Activated CD8-positive, alpha-beta T cell treated with anti-CD3 and anti-CD28 coated beads for 36 hours (primary cell): ENCODE measurements at regions of chr7 and their contacts with region 1.

Region 1: DNA sequence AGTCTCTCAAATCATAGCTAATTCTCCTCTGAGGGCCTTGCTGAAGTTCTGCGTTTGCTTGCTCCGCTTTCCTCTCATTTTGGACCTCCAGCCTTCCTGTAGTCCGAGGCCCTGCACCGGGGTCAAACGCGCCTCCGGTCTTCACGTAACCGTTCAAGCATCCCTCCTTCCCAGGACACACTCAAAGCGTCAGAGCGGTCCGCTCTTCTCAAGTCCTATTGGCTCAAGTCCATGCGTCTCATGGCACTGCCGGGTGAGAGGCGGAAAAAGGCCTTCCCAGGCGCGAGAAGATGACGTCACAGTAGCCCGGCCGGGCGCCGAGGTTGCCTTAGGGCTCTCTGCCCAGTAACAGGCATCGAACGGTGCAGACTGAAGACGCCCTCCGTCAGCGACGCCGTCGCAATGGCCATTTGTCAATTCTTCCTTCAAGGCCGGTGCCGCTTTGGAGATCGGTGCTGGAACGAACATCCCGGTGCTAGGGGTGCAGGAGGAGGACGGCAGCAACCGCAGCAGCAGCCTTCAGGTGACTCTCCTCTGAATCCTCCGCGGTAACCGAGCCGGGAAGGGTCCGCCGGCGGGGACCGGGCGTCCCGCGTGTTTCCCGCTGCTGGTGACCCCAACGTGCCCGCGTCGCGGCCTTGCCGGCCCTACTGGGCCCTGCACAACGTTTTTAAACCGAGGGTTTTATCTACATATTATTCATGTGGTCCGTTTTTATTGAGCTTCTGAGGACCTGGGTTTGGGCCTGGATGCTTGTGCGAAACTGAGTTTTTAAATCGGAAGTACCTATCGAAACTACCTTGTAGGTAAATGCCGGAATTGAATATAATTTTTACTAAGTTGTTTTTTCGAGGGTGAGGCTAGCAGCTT is at the start of gene NUP42:
- DNase-seq: peak; percentile 98
- ATAC-seq: peak; percentile 98
- H3K4me3 Mint-ChIP-seq: peak within 1 kb of the TSS; percentile 96
- H3K27ac Mint-ChIP-seq: peak within 1 kb of the TSS; percentile 99
- H3K4me1 Mint-ChIP-seq: peaks cover 34% of the 10 kb centered on the region
- H3K27me3 Mint-ChIP-seq: no peaks in the 10 kb centered on the region
- CTCF ChIP-seq: no peak
- total RNA-seq, gene NUP42: 30.1 to 32.6 TPM

Region 2: DNA sequence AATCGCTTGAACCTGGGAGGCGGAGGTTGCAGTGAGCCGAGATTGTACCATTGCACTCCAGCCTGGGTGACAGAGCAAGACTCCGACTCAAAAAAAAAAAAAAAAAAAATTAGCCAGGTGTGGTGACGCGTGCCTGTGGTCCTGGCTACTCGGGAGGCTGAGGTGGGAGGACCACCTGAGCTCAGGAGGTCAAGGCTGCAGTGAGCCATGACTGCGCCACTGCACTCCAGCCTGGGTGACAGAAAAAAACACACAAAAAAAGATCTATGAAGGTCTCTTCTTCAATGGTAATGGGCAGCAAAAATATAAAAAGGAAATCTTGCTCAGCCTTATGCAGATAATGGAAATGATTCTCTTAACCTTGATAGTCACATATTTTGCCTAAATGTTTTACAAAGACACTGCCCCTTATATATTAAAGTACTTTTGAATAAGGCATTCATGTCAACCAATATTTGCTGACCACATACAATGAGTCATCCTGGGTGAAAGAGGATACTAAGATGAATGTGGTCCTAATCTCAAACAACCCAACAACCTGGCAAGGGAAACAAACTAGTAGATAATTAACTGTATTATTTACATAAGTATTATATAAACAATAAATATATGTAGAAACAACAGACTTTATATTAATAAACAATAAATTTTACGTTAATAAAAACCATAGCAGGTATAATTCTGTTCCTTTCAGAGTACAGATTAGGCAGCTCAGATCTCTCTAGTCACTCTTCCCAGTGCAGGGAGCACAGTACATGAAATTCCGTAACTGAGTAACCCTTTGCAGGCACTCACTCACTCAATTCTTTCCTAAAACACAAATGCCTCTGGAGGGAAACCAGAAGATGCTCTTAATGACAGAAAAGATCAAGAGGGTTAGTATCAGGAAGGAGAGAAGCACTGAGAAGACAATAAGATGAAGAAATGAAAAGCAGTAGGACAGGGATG is 367.4 kb before region 1 on chr7:
- CTCF ChIA-PET with region 1: no interaction called
- POLR2A ChIA-PET with region 1: no interaction called
- intact Hi-C with region 1: no loop called
- DNase-seq: no peak
- ATAC-seq: no peak
- H3K4me3 Mint-ChIP-seq: no peak overlapping the region
- H3K27ac Mint-ChIP-seq: peak overlapping the region; percentile 25
- H3K4me1 Mint-ChIP-seq: peaks cover 32% of the 10 kb centered on the region
- H3K27me3 Mint-ChIP-seq: no peaks in the 10 kb centered on the region
- CTCF ChIP-seq: no peak

Region 3: GRCh38 chr7:23105644-23106056 is 76.3 kb before region 1 on chr7 and contains the start of gene KLHL7:
- CTCF ChIA-PET with region 1: interaction called, 13 read pairs
- POLR2A ChIA-PET with region 1: interaction called, 7 read pairs
- intact Hi-C with region 1: loop called (anchors 2 kb)
- DNase-seq: peak; percentile 99
- ATAC-seq: peak; percentile 98
- H3K4me3 Mint-ChIP-seq: peak within 1 kb of the TSS; percentile 97
- H3K27ac Mint-ChIP-seq: peak within 1 kb of the TSS; percentile 96
- H3K4me1 Mint-ChIP-seq: peaks cover 33% of the 10 kb centered on the region
- H3K27me3 Mint-ChIP-seq: no peaks in the 10 kb centered on the region
- CTCF ChIP-seq: no peak
- total RNA-seq, gene KLHL7: 17.1 to 18.2 TPM